Tibial artery (tissue), 4 donors: ENCODE measurements at regions of chr3 and their contacts with region 1.

Region 1: GRCh38 chr3:112582244-112582874 is 20.5 kb downstream of the SLC35A5 start:
- DNase-seq: no peak
- H3K4me3 ChIP-seq: no peak overlapping the region
- H3K27ac ChIP-seq: no peak overlapping the region
- H3K4me1 ChIP-seq: peaks cover 0 to 16% (median 0%) of the 10 kb centered on the region in 4 donors
- H3K27me3 ChIP-seq: no peaks in the 10 kb centered on the region
- CTCF ChIP-seq: peak; percentile 52 to 58

Region 2: DNA sequence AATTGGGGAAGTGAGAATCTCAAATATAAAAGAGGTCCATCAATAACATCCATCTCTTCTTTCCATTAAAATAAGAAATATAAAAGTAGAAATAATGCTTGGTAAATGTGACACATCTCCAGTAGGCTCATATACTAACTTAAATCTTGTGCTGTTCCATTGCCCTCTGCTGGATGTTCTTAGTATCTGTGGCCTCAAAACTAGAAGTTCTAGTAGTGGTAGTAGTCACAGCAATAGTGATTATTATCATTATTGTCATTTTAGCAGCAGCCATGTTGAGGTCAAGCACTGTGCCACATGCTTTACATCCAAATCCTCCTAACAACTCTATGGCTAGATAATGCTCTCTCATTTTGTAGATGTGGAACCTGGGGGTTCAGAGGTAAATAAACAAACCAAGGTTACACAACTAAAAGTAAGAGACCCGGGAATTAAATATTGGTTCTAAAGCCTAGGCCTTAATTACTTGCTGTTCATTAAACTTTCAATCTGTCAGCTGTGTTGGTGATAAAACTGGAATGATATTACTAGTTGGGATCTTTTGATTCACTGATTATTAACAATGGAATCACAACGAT is 62.8 kb before region 1 on chr3:
- intact Hi-C with region 1: no loop called
- DNase-seq: no peak
- H3K4me3 ChIP-seq: no peak overlapping the region
- H3K27ac ChIP-seq: no peak overlapping the region
- H3K4me1 ChIP-seq: no peaks in the 10 kb centered on the region
- H3K27me3 ChIP-seq: no peaks in the 10 kb centered on the region
- CTCF ChIP-seq: peak; percentile 75 to 86

Region 3: DNA sequence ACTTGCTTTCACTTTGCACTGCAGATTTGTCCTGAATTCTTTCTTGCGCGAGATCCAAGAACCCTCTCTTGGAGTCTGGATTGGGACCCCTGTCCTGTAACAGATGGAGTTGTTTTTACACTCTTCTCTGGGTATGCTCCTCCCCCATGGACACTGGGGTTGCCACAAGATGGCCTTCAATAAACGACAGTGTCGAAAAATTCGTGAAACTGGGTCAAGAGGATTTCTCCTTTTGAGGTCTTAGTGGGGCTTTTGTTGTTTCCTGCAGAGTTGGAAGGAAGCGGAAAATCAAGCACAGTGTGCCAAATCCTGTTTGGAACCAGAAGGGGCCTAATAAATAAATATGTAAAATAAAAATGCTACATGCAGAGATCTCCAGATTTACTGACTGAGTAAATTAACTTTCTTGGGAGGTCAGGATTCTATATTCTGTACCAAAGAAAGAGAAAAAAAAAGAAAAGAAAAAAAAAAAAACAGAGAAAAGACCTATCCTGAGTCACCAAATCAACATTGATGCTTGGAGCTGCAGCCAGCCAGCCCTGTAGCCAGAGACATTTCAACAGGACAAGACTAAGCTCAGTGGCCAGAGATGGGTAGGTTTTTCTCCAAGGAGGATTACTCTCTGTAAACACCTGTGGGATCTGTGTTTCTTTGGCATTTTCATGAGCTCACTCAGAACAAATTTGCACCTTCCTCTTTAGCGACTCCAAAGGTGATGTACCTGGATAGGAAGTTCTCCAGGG is 33.8 kb after region 1 on chr3:
- intact Hi-C with region 1: loop called (anchors 2 kb)
- DNase-seq: no peak
- H3K4me3 ChIP-seq: no peak overlapping the region
- H3K27ac ChIP-seq: no peak overlapping the region
- H3K4me1 ChIP-seq: peaks cover 0 to 4% (median 1%) of the 10 kb centered on the region in 4 donors
- H3K27me3 ChIP-seq: no peaks in the 10 kb centered on the region
- CTCF ChIP-seq: no peak

Region 4: DNA sequence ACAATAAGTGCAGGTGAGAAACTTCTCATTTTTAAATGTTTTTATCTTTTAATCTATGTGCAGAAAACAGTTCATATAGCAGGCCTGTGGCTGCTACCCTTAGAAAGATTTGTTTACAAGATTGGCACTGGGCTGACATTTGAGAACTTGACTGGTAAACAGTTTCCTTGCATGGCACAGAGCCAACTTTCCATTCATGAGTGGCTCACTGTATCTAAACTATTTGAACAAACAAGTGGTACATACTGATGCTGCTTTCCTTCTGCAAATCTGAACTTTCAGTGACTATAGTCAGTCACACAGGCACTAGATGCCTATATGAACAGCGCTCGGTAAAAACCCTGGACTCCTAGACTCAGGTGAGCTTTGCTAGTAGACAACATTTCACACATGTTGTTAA is 402.1 kb after region 1 on chr3:
- intact Hi-C with region 1: loop called (anchors 10 kb)
- DNase-seq: no peak
- H3K4me3 ChIP-seq: no peak overlapping the region
- H3K27ac ChIP-seq: no peak overlapping the region
- H3K4me1 ChIP-seq: no peaks in the 10 kb centered on the region
- H3K27me3 ChIP-seq: no peaks in the 10 kb centered on the region
- CTCF ChIP-seq: no peak